HepG2 (cell line): ENCODE measurements at regions of chr10 and their contacts with region 1.

Region 1: GRCh38 chr10:28250782-28251181 is 52.1 kb downstream of the MPP7 start:
- DNase-seq: peak; percentile 29
- ATAC-seq: no peak
- H3K4me3 ChIP-seq: no peak overlapping the region
- H3K27ac ChIP-seq: no peak overlapping the region
- H3K4me1 ChIP-seq: no peaks in the 10 kb centered on the region
- H3K27me3 ChIP-seq: no peaks in the 10 kb centered on the region
- CTCF ChIP-seq: peak; percentile 49
- EP300 ChIP-seq: no peak
- POLR2A ChIP-seq: no peak
- RAD21 ChIP-seq: peak; percentile 51

Region 2: DNA sequence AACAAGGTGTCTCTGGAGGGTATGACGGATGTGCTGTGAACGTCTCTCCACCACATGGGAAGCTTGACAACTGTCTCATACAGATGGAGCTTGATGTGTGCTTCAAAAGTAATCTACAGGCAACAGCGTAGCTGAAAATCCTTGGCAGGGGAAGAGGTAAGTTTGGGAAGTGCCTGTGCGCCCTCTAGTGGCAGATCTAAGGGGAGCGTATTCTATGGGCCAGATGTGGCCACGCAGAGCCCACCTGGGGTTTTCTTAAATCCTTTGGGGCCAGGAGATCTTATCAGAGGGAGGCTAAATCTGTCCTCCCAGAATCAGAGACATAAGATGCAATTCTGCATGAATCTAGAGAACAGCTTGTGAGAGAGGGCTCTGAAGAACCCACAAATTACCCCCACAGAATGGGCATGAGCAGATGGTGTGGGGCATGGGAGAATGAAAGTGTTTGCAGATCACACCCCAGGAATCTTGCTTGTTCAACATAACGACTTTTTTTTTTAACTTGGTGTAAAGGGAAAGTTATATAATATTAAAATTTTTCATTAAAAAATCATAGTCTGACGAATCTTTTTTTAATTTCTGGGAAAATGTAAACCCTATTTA is 143.3 kb after region 1 on chr10:
- CTCF ChIA-PET with region 1: interaction called, 12 read pairs
- POLR2A ChIA-PET with region 1: no interaction called
- in situ Hi-C with region 1: no loop called
- intact Hi-C with region 1: no loop called
- DNase-seq: peak; percentile 49
- ATAC-seq: peak; percentile 97
- H3K4me3 ChIP-seq: no peak overlapping the region
- H3K27ac ChIP-seq: no peak overlapping the region
- H3K4me1 ChIP-seq: peaks cover 5% of the 10 kb centered on the region; the same call in 1 of the 2 replicates
- H3K27me3 ChIP-seq: peaks cover 0 to 7% of the 10 kb centered on the region in 2 experiments; a peak in 2 of 5 replicates
- CTCF ChIP-seq: peak; percentile 89
- EP300 ChIP-seq: no peak
- POLR2A ChIP-seq: no peak
- RAD21 ChIP-seq: peak; percentile 64